Heart right ventricle (tissue), 16 donors: ENCODE measurements at regions of chr10 and their contacts with region 1.

Region 1: DNA sequence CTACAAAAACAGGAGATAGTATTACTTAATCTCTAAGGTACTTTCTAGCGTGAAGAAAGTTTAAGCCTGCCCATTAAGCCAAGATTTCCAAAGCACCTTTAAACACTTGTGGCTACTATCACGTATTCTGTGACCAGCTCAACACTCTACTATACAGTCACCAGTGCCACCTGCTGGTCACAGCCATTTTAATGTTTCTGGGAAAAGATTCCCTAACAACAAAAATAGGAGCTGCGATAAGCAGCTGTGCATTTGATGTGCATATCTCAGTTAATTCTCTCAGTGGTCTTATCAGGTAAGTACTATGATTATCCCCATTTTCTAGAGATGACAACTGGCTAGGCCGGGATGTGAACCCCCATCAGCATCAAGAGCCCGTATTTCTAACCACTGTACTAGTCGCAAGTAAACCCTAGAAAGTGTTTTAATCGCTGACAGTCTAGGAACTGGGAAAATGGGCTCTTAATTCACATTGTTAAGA is 860 bp downstream of the SEC31B start:
- DNase-seq: peak in 1 of 2 donors; percentile 65
- ATAC-seq: peak; percentile 58 to 86 (median 76)
- H3K4me3 ChIP-seq: peak overlapping the region; percentile 49 to 70 (median 58)
- H3K27ac ChIP-seq: peak overlapping the region in 9 of 10 donors; percentile 26 to 70 (median 56)
- H3K4me1 ChIP-seq: peaks cover 0 to 19% (median 14%) of the 10 kb centered on the region in 9 donors
- H3K27me3 ChIP-seq: peaks cover 0 to 13% (median 0%) of the 10 kb centered on the region in 7 donors
- CTCF ChIP-seq: peak; percentile 28 to 81 (median 72)

Region 2: GRCh38 chr10:100338434-100339036 is 180.3 kb before region 1 on chr10:
- intact Hi-C with region 1: loop called in 7 of 10 experiments (anchors 2 to 10 kb)
- DNase-seq: peak; percentile 72 to 75
- ATAC-seq: peak; percentile 53 to 80 (median 74)
- H3K4me3 ChIP-seq: no peak overlapping the region
- H3K27ac ChIP-seq: no peak overlapping the region
- H3K4me1 ChIP-seq: peaks cover 0 to 28% (median 0%) of the 10 kb centered on the region in 9 donors
- H3K27me3 ChIP-seq: peaks cover 0 to 30% (median 16%) of the 10 kb centered on the region in 7 donors
- CTCF ChIP-seq: peak; percentile 86 to 95 (median 92)

Region 3: GRCh38 chr10:100346765-100347567 is 171.8 kb before region 1 on chr10 and contains the start of gene SCD:
- intact Hi-C with region 1: loop called in 1 of 10 experiments (anchors 10 kb)
- DNase-seq: peak; percentile 69 to 75
- ATAC-seq: peak; percentile 78 to 87 (median 85)
- H3K4me3 ChIP-seq: peak within 1 kb of the TSS; percentile 19 to 74 (median 64)
- H3K27ac ChIP-seq: peak within 1 kb of the TSS in 3 of 10 donors; percentile 41 to 78 (median 43)
- H3K4me1 ChIP-seq: peaks cover 0 to 27% (median 19%) of the 10 kb centered on the region in 9 donors
- H3K27me3 ChIP-seq: peaks cover 0 to 40% (median 8%) of the 10 kb centered on the region in 7 donors
- CTCF ChIP-seq: no peak
- total RNA-seq, gene SCD: 1.8 to 24.7 (median 12.6) TPM

Region 4: DNA sequence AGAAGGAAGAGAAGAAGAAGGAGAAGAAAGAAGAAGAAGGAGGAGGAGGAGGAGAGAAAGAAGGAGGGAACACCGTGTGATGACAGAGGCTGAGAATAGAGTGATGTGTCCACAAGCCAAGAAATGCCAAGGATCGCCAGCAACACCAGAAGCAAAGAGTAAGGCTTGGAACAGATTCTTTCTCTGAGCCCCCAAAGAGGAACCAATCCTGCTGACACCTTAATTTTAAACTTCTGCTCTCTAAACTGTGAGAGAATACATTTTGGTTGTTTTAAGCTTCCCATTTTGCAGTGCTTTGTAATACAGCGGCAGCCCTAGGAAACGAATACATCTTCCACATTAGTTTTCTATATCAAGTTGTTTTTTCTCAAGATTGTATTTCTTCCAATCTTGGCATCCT is 69.8 kb before region 1 on chr10:
- intact Hi-C with region 1: no loop called
- DNase-seq: no peak
- ATAC-seq: no peak
- H3K4me3 ChIP-seq: no peak overlapping the region
- H3K27ac ChIP-seq: no peak overlapping the region
- H3K4me1 ChIP-seq: peaks cover 0 to 6% (median 0%) of the 10 kb centered on the region in 9 donors
- H3K27me3 ChIP-seq: peaks cover 0 to 37% (median 8%) of the 10 kb centered on the region in 7 donors
- CTCF ChIP-seq: no peak